Activated T-helper 2 cell treated with anti-CD3 and anti-CD28 coated beads, Interferon-gamma antibody, Interleukin-2, Interleukin-4, amounts not matched to agents 10 μg/mL and 5 μg/mL and 100 μg/mL, durations not matched to agents 14 hours and 24 hours and 36 hours (primary cell): ENCODE measurements at regions of chr3 and their contacts with region 1.

Region 1: GRCh38 chr3:33023172-33024136 is 72.0 kb downstream of the CCR4 start:
- DNase-seq: no peak
- H3K4me3 Mint-ChIP-seq: peak overlapping the region; percentile 14
- H3K27ac Mint-ChIP-seq: peak overlapping the region; percentile 89
- H3K4me1 Mint-ChIP-seq: peaks cover 54% of the 10 kb centered on the region
- H3K27me3 Mint-ChIP-seq: no peaks in the 10 kb centered on the region

Region 2: GRCh38 chr3:32484436-32484835 is 539.0 kb before region 1 on chr3:
- intact Hi-C with region 1: no loop called
- DNase-seq: no peak
- H3K4me3 Mint-ChIP-seq: no peak overlapping the region
- H3K27ac Mint-ChIP-seq: no peak overlapping the region
- H3K4me1 Mint-ChIP-seq: peaks cover 25% of the 10 kb centered on the region
- H3K27me3 Mint-ChIP-seq: no peaks in the 10 kb centered on the region

Region 3: DNA sequence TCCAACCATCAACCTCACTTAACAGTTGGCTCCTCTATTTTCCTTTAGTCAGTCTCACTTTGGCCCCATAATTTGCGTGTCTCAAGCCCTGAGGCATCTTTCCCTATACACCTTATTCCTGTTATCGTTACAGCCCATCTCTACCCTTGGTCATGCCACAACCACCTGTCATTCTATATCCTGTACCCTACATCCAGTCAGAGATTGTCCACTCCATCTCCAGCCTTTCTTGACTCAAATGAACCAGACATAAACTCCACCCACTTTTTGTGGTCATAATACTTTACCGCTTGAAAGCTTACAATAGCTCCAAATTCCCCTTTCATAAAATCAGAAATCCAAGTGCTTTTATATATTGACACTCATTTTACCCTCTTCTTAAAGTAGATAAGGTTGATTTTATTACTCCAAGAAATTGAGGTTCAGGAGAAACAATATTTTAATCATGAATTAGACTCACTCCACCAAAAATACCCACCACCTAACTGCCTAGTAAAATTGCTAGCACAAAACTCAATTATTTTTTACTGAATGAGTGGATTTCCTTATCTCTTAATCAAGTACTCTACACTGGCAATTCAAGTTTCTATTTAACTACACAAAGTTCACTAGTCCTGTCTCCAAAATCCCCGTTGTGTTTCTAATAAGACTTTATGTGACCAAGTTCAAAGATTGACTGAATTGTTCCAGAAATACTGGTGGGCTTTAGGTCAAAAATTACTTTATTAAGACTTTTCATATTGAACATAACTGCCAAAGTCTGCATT is 62.9 kb before region 1 on chr3:
- intact Hi-C with region 1: loop called (anchors 1 kb)
- DNase-seq: no peak
- H3K4me3 Mint-ChIP-seq: peak overlapping the region; percentile 73
- H3K27ac Mint-ChIP-seq: peak overlapping the region; percentile 99
- H3K4me1 Mint-ChIP-seq: peaks cover 62% of the 10 kb centered on the region
- H3K27me3 Mint-ChIP-seq: no peaks in the 10 kb centered on the region

Region 4: DNA sequence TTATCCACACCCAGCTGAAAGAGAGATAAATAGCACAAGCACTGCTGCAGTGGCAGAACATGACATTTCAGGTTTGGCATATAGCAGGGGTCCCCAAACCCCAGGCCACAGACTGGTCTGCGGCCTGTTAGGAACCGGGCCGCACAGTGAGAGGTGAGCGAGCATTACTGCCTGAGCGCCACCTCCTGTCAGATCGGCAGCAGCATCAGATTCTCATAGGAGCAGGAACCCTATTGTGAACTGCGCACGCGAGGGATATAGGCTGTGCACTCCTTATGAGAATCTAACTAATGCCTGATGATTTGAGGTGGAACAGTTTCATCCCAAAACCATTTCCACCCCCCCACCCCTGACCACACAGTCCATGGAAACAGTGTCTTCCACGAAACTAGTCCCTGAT is 17.4 kb before region 1 on chr3:
- intact Hi-C with region 1: loop called (anchors 1 kb)
- DNase-seq: no peak
- H3K4me3 Mint-ChIP-seq: no peak overlapping the region
- H3K27ac Mint-ChIP-seq: peak overlapping the region; percentile 84
- H3K4me1 Mint-ChIP-seq: peaks cover 59% of the 10 kb centered on the region
- H3K27me3 Mint-ChIP-seq: no peaks in the 10 kb centered on the region

Region 5: DNA sequence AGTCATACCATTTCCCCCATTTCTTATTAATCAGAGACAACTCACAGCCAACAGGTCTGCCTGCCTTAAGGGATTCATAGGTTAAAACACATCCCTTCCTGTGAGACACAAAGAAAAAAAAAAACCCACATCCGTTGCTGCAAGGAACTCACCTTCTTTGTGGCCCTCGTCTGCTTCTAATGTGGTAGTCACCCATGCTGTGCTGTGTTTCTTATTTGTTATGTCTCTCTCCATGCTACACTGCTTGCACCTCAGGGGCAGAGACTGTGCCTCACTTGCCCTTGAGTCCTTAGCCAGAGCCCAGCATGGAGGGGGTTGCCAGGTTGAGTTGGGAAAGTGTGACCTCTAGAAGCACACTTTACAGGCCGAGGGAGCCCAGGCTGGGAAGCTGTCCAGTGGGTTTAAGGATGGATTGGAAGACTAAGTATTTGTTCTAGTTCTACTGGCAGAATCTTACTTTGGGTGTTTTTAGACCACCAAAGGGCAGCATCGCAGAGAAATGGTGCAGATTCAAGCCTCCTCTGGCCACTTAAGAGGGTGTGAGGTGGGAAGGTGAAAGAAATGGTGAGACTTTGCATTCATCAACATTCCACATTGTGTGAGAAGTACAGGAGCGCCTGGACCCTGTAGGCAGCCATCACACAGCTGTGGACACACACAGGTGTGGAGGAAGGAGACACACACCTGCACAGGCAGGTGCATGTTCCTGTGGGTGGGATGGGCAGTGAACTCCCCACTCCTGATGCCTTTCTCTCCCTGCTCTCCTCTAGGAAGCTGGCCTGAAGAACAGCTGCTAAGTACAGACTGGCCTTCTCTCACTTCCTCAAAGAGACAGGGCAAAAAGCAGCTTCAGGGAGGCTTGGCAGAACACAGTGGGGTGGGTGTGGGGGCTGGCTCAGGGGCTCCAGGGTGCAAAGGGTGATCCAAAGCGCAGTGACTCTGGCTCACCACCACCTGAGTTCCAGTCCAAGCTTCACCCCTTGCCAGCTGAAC is 24.7 kb after region 1 on chr3:
- intact Hi-C with region 1: loop called (anchors 1 kb)
- DNase-seq: peak; percentile 62
- H3K4me3 Mint-ChIP-seq: peak overlapping the region; percentile 66
- H3K27ac Mint-ChIP-seq: peak overlapping the region; percentile 98
- H3K4me1 Mint-ChIP-seq: peaks cover 63% of the 10 kb centered on the region
- H3K27me3 Mint-ChIP-seq: no peaks in the 10 kb centered on the region

Region 6: GRCh38 chr3:33167716-33168336 is 144.4 kb after region 1 on chr3:
- intact Hi-C with region 1: no loop called
- DNase-seq: no peak
- H3K4me3 Mint-ChIP-seq: no peak overlapping the region
- H3K27ac Mint-ChIP-seq: no peak overlapping the region
- H3K4me1 Mint-ChIP-seq: peaks cover 9% of the 10 kb centered on the region
- H3K27me3 Mint-ChIP-seq: peaks cover 5% of the 10 kb centered on the region

Region 7: GRCh38 chr3:33722626-33723370 is 699.3 kb after region 1 on chr3:
- intact Hi-C with region 1: no loop called
- DNase-seq: no peak
- H3K4me3 Mint-ChIP-seq: no peak overlapping the region
- H3K27ac Mint-ChIP-seq: no peak overlapping the region
- H3K4me1 Mint-ChIP-seq: peaks cover 4% of the 10 kb centered on the region
- H3K27me3 Mint-ChIP-seq: peaks cover 6% of the 10 kb centered on the region